Calu3 (cell line): ENCODE measurements at regions of chr1 and their contacts with region 1.

Region 1: GRCh38 chr1:222739465-222739864 is 2.5 kb downstream of the FAM177B start:
- DNase-seq: no peak
- H3K4me3 Mint-ChIP-seq: no peak overlapping the region
- H3K27ac Mint-ChIP-seq: no peak overlapping the region
- H3K4me1 Mint-ChIP-seq: no peaks in the 10 kb centered on the region
- H3K27me3 Mint-ChIP-seq: no peaks in the 10 kb centered on the region
- CTCF ChIP-seq: no peak

Region 2: GRCh38 chr1:222784916-222785315 is 45.5 kb after region 1 on chr1:
- CTCF ChIA-PET with region 1: interaction called, 3 read pairs
- intact Hi-C with region 1: loop called (anchors 2 kb)
- DNase-seq: no peak
- H3K4me3 Mint-ChIP-seq: no peak overlapping the region
- H3K27ac Mint-ChIP-seq: peak overlapping the region; percentile 16
- H3K4me1 Mint-ChIP-seq: peaks cover 31% of the 10 kb centered on the region
- H3K27me3 Mint-ChIP-seq: peaks cover 53% of the 10 kb centered on the region
- CTCF ChIP-seq: no peak

Region 3: DNA sequence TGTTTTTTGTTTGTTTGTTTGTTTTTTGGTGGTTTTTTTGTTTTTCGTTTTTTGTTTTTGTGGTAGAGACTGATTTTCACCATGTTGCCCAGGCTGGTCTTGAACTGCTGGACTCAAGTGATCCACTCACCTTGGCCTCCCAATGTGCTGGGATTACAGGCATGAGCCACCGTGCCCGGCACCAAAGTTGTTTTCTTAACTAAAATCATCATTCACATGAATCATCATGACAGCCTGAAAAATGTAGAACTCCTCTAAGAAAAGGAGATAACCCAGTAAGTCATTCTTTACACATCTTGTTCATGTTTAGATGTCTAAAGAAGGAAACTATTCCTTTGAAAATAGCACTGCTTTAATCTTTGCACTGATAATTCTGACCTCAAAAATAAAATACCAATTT is 112.9 kb after region 1 on chr1:
- CTCF ChIA-PET with region 1: no interaction called
- intact Hi-C with region 1: no loop called
- DNase-seq: no peak
- H3K4me3 Mint-ChIP-seq: no peak overlapping the region
- H3K27ac Mint-ChIP-seq: no peak overlapping the region
- H3K4me1 Mint-ChIP-seq: no peaks in the 10 kb centered on the region
- H3K27me3 Mint-ChIP-seq: no peaks in the 10 kb centered on the region
- CTCF ChIP-seq: no peak